ENCODE measurements at regions of chr6 and their contacts with region 1.

Region 1: GRCh38 chr6:88870717-88871330 is 92.6 kb downstream of the RNGTT start:
- DNase-seq: no peak
- H3K4me3 Mint-ChIP-seq: no peak overlapping the region
- H3K27ac Mint-ChIP-seq: no peak overlapping the region
- H3K4me1 Mint-ChIP-seq: peaks cover 23% of the 10 kb centered on the region
- H3K27me3 Mint-ChIP-seq: no peaks in the 10 kb centered on the region

Region 2: DNA sequence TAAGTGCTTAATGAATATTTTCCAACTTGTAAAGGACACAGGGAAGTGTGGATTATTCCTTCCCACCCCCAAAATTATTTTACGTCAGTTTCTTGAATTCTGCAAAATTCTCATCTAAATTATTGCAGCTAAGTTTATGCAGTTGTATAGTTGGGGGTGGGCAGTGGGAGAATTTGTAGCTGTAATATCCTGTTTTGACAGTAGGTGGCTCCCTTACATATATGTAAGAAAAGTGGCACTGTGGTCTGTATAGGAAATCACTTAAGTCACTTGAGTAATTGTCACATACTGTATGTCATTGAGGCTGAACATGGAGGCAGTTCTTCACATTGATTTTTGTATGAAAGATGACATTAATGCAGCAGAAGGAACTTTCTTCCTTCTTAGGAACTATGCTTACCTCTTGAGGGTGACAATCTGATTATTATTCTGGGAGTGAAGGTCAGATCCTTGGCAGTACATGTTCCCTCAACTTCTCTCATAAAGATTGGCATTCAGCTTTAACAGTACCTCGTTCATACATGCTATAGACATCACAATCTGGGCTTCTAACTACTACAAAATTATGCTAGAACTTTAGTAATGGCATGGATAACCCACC is 1477.7 kb before region 1 on chr6:
- intact Hi-C with region 1: loop called (anchors 2 kb)
- DNase-seq: no peak
- H3K4me3 Mint-ChIP-seq: no peak overlapping the region
- H3K27ac Mint-ChIP-seq: no peak overlapping the region
- H3K4me1 Mint-ChIP-seq: no peaks in the 10 kb centered on the region
- H3K27me3 Mint-ChIP-seq: no peaks in the 10 kb centered on the region

Region 3: DNA sequence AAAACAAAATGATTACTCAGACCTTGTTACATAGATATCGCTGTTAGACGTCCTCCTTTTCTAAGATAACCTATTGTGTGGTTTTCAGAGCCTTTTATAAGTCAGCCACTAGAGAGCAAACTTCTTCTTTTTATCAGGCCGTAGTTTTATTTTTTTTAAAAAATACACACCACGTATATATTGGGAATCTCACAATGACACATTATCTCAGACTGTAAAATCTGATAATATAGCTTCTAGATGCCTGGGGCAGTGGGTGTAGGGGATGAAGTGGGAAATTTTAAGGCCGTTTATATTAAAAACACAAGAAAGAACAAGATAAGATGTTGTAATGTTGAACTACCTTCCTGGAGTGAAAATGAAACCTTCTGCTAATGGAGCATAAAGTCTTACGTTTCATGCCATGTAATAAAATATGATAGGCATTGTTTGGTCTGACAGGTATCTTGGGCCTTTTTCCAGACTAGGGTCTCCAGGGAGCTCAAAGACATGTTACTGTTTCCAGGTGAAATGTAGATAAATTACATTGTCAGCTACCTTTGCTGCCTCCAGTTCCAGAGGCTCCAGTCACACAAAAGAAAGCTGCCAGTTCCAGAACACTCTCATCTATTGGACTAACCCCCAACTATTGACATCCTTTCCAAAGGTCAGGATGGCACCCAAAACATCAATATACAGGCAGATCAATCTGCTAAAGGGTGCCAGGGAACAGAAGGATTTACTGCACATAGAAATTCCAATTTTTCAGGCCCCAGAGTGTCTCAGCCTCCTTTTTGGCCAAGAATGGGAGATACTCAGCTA is 1038.6 kb before region 1 on chr6:
- intact Hi-C with region 1: loop called (anchors 2 kb)
- DNase-seq: no peak
- H3K4me3 Mint-ChIP-seq: peak overlapping the region; percentile 59
- H3K27ac Mint-ChIP-seq: no peak overlapping the region
- H3K4me1 Mint-ChIP-seq: peaks cover 10% of the 10 kb centered on the region
- H3K27me3 Mint-ChIP-seq: peaks cover 7% of the 10 kb centered on the region

Region 4: DNA sequence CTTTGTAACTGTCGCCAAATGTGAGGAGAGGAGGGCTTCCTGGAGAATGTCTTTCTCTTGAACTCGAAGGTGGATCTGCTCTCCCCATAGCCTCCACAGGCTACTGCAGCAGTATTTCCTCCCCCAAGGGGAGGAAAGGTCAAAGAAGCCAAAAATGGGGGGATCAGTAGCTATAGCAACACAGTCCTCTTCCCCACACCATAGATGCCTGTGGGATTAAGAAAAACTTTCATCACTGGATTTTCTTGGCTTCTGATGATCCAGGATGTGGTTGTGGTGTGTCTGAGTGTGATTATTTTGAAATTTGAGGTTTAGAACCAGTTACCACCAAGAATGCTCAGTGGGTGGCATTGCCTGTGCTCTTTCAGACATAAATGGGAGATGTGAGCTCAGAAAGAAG is 963.3 kb before region 1 on chr6:
- intact Hi-C with region 1: loop called (anchors 5 kb)
- DNase-seq: peak; percentile 22
- H3K4me3 Mint-ChIP-seq: no peak overlapping the region
- H3K27ac Mint-ChIP-seq: peak overlapping the region; percentile 64
- H3K4me1 Mint-ChIP-seq: peaks cover 61% of the 10 kb centered on the region
- H3K27me3 Mint-ChIP-seq: peaks cover 20% of the 10 kb centered on the region

Region 5: DNA sequence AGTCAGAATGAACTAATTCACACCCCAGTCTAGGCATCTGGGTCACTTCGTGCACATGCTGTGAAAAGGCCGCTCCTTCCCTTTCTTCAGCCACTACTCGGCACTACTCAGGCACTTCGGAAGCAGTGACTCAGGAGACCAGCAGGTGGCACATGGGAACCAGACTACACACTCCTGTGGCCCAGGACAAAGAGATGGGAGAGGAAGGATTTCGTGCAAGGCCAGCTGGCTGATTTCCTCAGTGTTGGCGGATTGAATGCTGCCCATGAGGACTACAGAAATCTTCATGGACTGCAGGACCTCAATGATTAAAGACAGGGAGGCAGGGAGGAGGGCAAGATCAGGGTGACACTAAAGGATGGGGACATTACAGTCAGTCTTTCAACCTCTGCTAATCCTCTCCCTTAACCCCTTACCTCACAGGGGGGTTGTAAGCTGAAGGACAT is 941.0 kb before region 1 on chr6:
- intact Hi-C with region 1: loop called (anchors 5 kb)
- DNase-seq: peak; percentile 27
- H3K4me3 Mint-ChIP-seq: no peak overlapping the region
- H3K27ac Mint-ChIP-seq: no peak overlapping the region
- H3K4me1 Mint-ChIP-seq: peaks cover 11% of the 10 kb centered on the region
- H3K27me3 Mint-ChIP-seq: peaks cover 5% of the 10 kb centered on the region

Region 6: DNA sequence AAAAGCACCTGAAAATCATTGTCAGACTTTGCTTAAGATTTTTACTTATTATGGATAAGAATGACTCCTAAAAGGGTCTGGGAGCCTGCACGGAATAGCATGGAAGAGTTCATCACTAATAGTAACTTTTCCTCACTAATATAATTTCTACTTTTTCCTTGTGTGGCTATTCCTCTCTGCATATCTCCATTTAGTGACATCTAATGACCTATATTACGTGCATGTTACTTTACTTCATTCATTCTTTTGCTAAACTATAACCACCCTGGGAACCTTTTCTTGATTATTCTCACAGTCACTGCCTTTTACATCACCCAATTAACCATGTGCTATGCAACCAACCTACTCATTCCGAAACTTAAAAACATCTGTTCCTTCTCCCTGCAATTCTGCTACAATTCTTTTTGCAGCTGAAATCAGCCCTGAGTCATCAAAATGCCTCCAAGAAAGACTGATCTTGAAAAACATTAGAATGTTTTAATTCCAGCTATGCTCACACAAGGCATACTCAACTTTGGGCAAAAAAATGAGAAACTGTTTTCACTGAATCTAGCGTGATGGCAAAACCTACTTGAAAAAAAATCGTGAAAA is 220.7 kb before region 1 on chr6:
- intact Hi-C with region 1: no loop called
- DNase-seq: no peak
- H3K4me3 Mint-ChIP-seq: no peak overlapping the region
- H3K27ac Mint-ChIP-seq: peak overlapping the region; percentile 11
- H3K4me1 Mint-ChIP-seq: peaks cover 3% of the 10 kb centered on the region
- H3K27me3 Mint-ChIP-seq: no peaks in the 10 kb centered on the region

Region 7: DNA sequence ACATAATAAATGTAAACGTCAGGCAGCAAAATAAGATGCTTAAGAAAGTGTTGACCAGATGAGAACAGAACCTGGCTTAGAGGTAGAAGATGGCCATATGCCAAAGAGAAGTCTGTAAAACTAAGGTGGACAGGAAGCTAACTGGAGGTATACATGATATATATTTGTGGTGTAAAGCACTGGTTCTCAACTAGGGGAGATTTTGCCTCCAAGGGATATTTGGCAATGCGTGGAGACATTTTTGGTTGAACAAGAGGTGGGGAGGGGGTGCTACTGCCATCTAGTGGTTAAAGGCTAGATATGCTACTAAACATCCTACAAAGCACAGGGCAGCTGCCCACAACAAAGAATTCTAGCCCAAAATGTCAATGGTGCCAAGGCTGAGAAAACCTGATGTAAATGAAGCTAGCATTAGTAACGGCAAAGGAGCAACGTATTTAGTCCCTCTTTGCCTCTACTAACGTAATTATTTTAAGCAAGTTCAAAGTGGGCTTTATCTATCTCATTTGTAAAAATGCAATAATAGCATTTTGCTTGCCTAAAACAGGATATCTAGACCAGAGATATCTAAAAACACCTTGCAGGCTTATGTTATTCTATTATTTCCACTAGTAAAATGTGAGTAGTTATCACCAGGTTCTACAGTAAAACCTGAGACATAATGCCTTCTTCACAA is 90.0 kb before region 1 on chr6:
- intact Hi-C with region 1: loop called (anchors 5 kb)
- DNase-seq: peak; percentile 20
- H3K4me3 Mint-ChIP-seq: no peak overlapping the region
- H3K27ac Mint-ChIP-seq: no peak overlapping the region
- H3K4me1 Mint-ChIP-seq: peaks cover 1% of the 10 kb centered on the region
- H3K27me3 Mint-ChIP-seq: no peaks in the 10 kb centered on the region

Region 8: GRCh38 chr6:88835210-88835609 is 35.6 kb before region 1 on chr6:
- intact Hi-C with region 1: no loop called
- DNase-seq: no peak
- H3K4me3 Mint-ChIP-seq: no peak overlapping the region
- H3K27ac Mint-ChIP-seq: no peak overlapping the region
- H3K4me1 Mint-ChIP-seq: no peaks in the 10 kb centered on the region
- H3K27me3 Mint-ChIP-seq: no peaks in the 10 kb centered on the region